ENCODE measurements at regions of chr4 and their contacts with region 1.

Region 1: DNA sequence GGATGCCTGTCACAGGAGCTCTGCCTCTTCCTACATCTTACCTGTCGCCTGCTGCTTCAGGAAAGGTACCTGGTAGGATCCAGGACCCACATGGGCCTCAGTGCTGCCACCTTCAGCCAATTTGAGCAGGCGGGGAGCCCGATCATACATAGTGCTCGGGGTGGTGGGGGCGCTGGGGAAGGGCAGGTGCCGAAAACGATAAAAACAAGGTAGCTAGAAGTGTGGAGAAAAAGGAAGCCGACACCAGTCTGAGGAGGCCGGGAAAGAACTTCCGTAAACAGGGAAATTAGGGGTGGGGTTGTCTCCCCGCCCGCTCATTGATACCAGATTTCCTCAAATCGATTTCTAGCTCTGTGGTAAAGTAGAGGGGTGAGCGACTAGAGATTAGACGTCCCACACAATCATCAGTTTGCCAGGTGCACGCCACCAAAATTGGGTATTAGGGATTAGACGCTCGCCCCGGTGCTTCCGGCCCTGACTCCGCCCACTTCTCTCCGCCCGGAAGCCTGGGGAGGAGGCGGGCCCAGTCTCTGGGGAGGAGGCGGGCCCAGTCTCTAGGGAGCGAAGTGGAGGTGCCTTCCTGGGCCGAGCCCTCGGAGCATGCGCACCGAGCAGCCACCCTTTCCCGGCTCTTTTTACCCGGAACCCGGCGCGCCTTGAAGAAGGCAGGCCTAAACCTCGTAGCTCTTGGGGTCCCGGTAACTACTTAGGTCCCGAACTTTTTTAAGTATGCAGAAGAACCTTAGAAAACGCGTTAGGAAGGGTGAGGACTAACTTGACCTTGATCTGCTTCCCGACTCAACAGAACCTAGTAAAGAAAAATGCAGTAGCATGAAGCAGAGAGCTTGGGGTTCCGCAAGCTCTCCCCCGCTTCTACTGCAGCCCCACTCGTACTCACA is at the start of gene STPG2:
- DNase-seq: peak; percentile 97
- H3K4me3 ChIP-seq: peak within 1 kb of the TSS; percentile 72
- H3K27ac ChIP-seq: peak within 1 kb of the TSS; percentile 90
- H3K4me1 ChIP-seq: peaks cover 17% of the 10 kb centered on the region
- CTCF ChIP-seq: peak; percentile 88
- total RNA-seq, gene STPG2: not detected in 2 replicates

Region 2: GRCh38 chr4:98210281-98210680 is 67.0 kb after region 1 on chr4:
- CTCF ChIA-PET with region 1: no interaction called
- POLR2A ChIA-PET with region 1: no interaction called
- intact Hi-C with region 1: no loop called
- DNase-seq: no peak
- H3K4me3 ChIP-seq: no peak overlapping the region
- H3K27ac ChIP-seq: no peak overlapping the region
- H3K4me1 ChIP-seq: no peaks in the 10 kb centered on the region
- CTCF ChIP-seq: no peak

Region 3: GRCh38 chr4:98260579-98261290 is 117.5 kb after region 1 on chr4:
- CTCF ChIA-PET with region 1: interaction called, 8 read pairs
- POLR2A ChIA-PET with region 1: interaction called, 5 read pairs
- intact Hi-C with region 1: loop called (anchors 1 kb)
- DNase-seq: peak; percentile 94
- H3K4me3 ChIP-seq: peak overlapping the region; percentile 85
- H3K27ac ChIP-seq: peak overlapping the region; percentile 66
- H3K4me1 ChIP-seq: peaks cover 23% of the 10 kb centered on the region
- CTCF ChIP-seq: no peak

Region 4: DNA sequence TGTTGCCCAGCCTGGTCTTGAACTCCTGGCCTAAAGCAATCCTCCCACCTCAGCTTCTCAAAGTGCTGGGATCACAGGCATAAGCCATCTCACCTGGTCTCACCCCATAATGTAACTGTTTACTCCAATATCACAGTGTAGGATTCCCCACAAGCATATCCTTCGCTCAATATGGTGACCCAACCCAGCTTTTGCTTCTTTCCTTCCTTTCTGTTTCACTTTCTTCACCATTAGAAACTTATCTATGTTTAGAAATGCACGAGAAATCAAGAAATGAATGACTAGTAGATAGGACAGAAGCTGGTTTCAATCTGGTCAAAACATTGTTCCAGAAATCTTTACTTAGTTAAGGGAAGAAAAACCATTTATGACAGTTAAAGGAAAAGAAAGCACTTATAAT is 496.3 kb after region 1 on chr4:
- CTCF ChIA-PET with region 1: no interaction called
- POLR2A ChIA-PET with region 1: no interaction called
- intact Hi-C with region 1: no loop called
- DNase-seq: no peak
- H3K4me3 ChIP-seq: no peak overlapping the region
- H3K27ac ChIP-seq: no peak overlapping the region
- H3K4me1 ChIP-seq: no peaks in the 10 kb centered on the region
- CTCF ChIP-seq: no peak

Region 5: GRCh38 chr4:98662626-98663225 is 519.5 kb after region 1 on chr4:
- CTCF ChIA-PET with region 1: no interaction called
- POLR2A ChIA-PET with region 1: interaction called, 11 read pairs
- intact Hi-C with region 1: no loop called
- DNase-seq: no peak
- H3K4me3 ChIP-seq: no peak overlapping the region
- H3K27ac ChIP-seq: no peak overlapping the region
- H3K4me1 ChIP-seq: no peaks in the 10 kb centered on the region
- CTCF ChIP-seq: no peak

Region 6: DNA sequence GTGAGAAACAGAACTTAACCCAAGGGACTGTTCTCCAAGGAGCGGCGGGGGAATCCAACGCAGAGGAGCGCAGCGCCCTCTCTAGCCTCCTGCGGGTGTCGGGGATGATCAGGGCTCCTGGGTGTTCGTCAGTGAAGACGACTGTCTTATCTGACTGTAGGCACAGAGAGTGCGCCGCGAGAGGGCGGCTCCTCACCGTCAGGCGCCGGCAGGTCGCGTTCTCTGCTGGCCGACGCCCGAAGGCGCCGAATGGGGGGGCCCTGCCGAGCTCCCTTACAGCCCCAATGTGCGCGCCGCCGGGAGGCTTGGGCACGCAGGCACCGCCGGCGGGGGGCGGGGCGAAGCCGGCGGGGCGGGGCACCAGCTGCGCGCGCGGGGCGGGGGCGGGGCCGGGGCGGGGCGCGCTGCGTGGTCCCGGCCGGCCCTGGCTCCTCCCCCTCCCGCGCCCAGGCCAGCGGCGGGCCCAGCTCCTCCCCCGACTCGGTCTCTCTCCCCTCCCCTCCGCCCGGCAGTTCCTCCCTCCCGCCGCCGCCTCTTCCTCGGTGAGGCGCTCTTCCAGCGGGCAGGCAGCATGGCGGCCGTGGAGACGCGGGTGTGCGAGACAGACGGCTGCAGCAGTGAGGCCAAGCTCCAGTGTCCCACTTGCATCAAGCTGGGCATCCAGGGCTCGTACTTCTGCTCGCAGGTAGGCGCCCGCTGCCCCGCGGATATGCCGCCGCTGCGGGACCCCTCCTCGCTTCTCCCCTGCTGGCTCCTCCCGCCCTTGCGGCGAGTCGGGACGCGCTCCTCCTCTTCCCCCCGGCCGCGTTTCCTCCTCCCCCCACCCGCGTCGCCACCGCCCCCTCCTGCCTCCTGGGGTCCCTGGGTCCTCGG is 852.2 kb after region 1 on chr4 and contains the start of gene METAP1:
- CTCF ChIA-PET with region 1: no interaction called
- POLR2A ChIA-PET with region 1: interaction called, 4 read pairs
- intact Hi-C with region 1: loop called (anchors 1 kb)
- DNase-seq: peak; percentile 98
- H3K4me3 ChIP-seq: peak within 1 kb of the TSS; percentile 92
- H3K27ac ChIP-seq: peak within 1 kb of the TSS; percentile 72
- H3K4me1 ChIP-seq: peaks cover 15% of the 10 kb centered on the region
- CTCF ChIP-seq: peak; percentile 86
- total RNA-seq, gene METAP1: 42.6 and 46.8 TPM in 2 replicates

Region 7: DNA sequence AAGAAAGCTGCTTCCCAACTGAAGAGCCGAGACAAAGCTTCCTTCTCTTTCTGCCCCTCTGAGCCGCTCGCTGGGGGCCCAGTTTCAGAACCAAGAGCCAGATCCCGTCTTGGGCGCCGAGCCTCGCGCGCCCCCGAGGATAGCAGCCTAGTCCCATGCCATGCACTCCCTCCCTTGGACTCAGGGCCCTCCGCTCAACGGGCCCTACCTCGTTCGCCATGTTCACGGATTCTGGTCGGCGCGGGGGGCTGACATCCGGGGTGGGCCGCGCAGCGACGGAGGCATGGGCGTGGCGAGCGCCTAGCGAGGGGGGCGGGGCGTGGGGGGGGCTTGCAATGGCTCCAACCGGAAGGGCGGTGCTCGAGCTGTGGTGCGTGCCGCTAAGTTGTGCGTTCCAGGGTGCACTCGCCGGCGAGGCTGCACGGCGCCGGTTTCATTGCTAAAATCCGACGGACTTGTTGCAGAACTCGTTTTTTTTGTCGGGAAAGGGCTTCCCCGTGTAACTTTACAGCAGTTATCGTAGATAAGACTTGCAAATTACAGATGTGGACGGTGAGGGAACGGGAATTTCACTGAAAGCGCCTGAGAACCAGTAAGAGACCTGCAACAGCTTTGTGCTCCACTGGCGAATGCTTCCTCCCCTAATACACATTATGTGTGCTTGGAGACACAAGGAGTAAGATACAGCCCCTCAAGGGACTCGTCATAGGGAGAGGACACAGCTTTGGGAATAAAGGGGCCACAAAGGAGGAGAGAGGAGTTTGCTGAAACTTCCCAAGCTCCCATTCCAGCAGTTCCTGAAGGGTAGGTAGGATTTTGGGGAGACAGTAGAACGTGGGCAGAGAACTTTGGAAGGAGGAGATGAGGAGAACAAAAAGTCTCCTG is 945.5 kb after region 1 on chr4 and contains the start of gene ADH5:
- CTCF ChIA-PET with region 1: no interaction called
- POLR2A ChIA-PET with region 1: no interaction called
- intact Hi-C with region 1: loop called (anchors 10 kb)
- DNase-seq: peak; percentile 93
- H3K4me3 ChIP-seq: peak within 1 kb of the TSS; percentile 75
- H3K27ac ChIP-seq: peak within 1 kb of the TSS; percentile 50
- H3K4me1 ChIP-seq: peaks cover 23% of the 10 kb centered on the region
- CTCF ChIP-seq: no peak
- total RNA-seq, gene ADH5: 50.0 and 62.6 TPM in 2 replicates

Region 8: GRCh38 chr4:99563310-99564186 is 1420.3 kb after region 1 on chr4 and contains the start of gene TRMT10A:
- CTCF ChIA-PET with region 1: no interaction called
- POLR2A ChIA-PET with region 1: no interaction called
- intact Hi-C with region 1: loop called (anchors 10 kb)
- DNase-seq: peak; percentile 96
- H3K4me3 ChIP-seq: peak within 1 kb of the TSS; percentile 80
- H3K27ac ChIP-seq: peak within 1 kb of the TSS; percentile 78
- H3K4me1 ChIP-seq: peaks cover 12% of the 10 kb centered on the region
- CTCF ChIP-seq: no peak
- total RNA-seq, gene TRMT10A: 7.9 and 13.3 TPM in 2 replicates

Measured in OCI-LY7 (cell line).